HCT116 (cell line): ENCODE measurements at regions of chr6 and their contacts with region 1.

Region 1: DNA sequence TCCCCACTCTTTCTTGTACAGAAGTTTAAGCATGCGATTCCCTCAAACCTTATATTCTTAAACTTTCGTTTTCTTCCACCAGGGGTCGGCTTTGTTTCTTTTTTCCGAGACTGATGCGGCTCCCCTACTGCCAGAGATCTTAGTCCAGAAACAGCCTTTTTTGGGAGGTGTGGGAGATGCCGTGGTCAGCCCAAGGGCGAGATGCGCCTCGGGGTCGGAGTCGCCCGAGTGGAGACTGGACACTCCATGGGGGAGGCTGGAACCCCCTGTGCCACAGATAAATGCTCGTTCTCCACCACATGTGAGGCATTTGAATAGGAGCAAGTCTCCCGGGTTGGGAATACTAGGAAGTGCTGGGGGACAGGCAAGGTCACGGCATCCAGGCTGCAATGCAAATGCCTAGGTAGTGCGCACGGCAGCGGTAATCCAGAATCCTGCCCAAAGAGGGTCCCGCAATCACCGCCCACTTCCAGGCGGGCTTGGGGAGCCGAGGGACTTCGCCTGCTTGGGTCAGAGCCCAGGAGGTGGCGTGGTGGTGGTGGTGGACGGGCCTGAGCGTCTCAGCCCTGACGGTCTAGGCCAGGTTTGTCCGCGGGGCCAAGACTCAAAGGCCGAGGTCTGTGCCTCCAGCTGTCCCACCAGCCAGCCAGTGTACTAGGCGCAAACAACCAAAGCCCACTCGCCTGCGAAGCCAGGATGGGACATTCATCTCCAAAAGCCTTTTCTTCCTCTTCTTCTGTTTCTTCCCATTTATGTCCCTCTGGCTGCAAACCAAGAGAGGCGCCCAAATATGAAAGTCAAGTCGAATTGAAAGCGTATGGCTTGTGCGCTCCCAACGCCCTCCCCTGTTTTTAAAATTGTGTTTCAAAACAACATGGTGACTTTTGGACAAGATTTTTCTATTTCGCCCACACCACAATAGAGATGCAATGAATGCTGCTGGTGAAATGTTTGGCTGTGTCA is 39.3 kb upstream of the OSTM1 start:
- DNase-seq: peak; percentile 35
- ATAC-seq: peak; percentile 76
- H3K4me3 ChIP-seq: no peak overlapping the region
- H3K27ac ChIP-seq: no peak overlapping the region
- H3K4me1 ChIP-seq: no peaks in the 10 kb centered on the region
- H3K27me3 ChIP-seq: no peaks in the 10 kb centered on the region
- CTCF ChIP-seq: peak; percentile 37 to 86 (median 63); a peak in 5 of 6 replicates
- POLR2A ChIP-seq: no peak
- RAD21 ChIP-seq: peak; percentile 89

Region 2: GRCh38 chr6:107769053-107769658 is 344.7 kb before region 1 on chr6:
- CTCF ChIA-PET with region 1: no interaction called
- POLR2A ChIA-PET with region 1: no interaction called
- RAD21 ChIA-PET with region 1: no interaction called
- intact Hi-C with region 1: no loop called
- DNase-seq: no peak
- ATAC-seq: no peak
- H3K4me3 ChIP-seq: no peak overlapping the region
- H3K27ac ChIP-seq: no peak overlapping the region
- H3K4me1 ChIP-seq: no peaks in the 10 kb centered on the region
- H3K27me3 ChIP-seq: no peaks in the 10 kb centered on the region
- CTCF ChIP-seq: no peak
- POLR2A ChIP-seq: no peak
- RAD21 ChIP-seq: no peak

Region 3: GRCh38 chr6:108260809-108261569 is 147.2 kb after region 1 on chr6 and contains the start of gene SNX3:
- CTCF ChIA-PET with region 1: no interaction called
- POLR2A ChIA-PET with region 1: no interaction called
- RAD21 ChIA-PET with region 1: no interaction called
- intact Hi-C with region 1: loop called (anchors 10 kb)
- DNase-seq: peak; percentile 89
- ATAC-seq: peak; percentile 95
- H3K4me3 ChIP-seq: peak within 1 kb of the TSS; percentile 89 to 93
- H3K27ac ChIP-seq: peak within 1 kb of the TSS; percentile 53
- H3K4me1 ChIP-seq: peaks cover 0 to 19% of the 10 kb centered on the region in 2 experiments; a peak in 3 of 4 replicates
- H3K27me3 ChIP-seq: no peaks in the 10 kb centered on the region
- CTCF ChIP-seq: no peak
- POLR2A ChIP-seq: peak; percentile 81
- RAD21 ChIP-seq: no peak
- total RNA-seq, gene SNX3: 111 TPM

Region 4: GRCh38 chr6:108359901-108360882 is 246.4 kb after region 1 on chr6:
- CTCF ChIA-PET with region 1: no interaction called
- POLR2A ChIA-PET with region 1: no interaction called
- RAD21 ChIA-PET with region 1: no interaction called
- intact Hi-C with region 1: loop called (anchors 10 kb)
- DNase-seq: no peak
- ATAC-seq: peak; percentile 52; the same call in 1 of the 2 replicates
- H3K4me3 ChIP-seq: no peak overlapping the region
- H3K27ac ChIP-seq: no peak overlapping the region
- H3K4me1 ChIP-seq: no peaks in the 10 kb centered on the region
- H3K27me3 ChIP-seq: no peaks in the 10 kb centered on the region
- CTCF ChIP-seq: peak; percentile 18 to 32 (median 25); a peak in 3 of 6 replicates
- POLR2A ChIP-seq: no peak
- RAD21 ChIP-seq: peak; percentile 46

Region 5: DNA sequence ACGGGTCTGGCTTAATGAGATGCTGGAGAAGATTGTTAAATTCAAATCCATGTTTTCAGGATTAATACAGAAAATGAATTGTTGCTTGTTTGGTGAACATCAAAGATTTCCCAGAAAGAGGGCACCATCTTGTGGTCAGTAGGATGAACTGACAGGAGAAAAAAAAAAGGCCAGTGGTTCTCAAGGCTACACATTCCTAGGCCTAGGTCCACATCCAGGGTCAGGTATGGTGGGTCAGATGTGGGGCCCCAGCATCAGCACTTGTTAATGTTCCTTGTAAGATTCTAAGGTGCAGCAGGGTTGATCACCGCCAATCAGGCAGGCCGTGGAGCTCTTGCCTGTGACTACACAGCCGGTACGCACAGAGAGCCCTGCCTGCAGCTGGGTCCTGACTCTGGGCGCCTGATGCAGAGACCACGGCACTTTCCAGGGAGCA is 412.9 kb after region 1 on chr6:
- CTCF ChIA-PET with region 1: no interaction called
- POLR2A ChIA-PET with region 1: no interaction called
- RAD21 ChIA-PET with region 1: no interaction called
- intact Hi-C with region 1: loop called (anchors 1 kb)
- DNase-seq: no peak
- ATAC-seq: peak; percentile 74
- H3K4me3 ChIP-seq: no peak overlapping the region
- H3K27ac ChIP-seq: no peak overlapping the region
- H3K4me1 ChIP-seq: no peaks in the 10 kb centered on the region
- H3K27me3 ChIP-seq: no peaks in the 10 kb centered on the region
- CTCF ChIP-seq: peak; percentile 73 to 88 (median 79)
- POLR2A ChIP-seq: no peak
- RAD21 ChIP-seq: peak; percentile 90